ENCODE measurements at regions of chr1 and their contacts with region 1.

Region 1: GRCh38 chr1:209692745-209693504 is 11.7 kb upstream of the HSD11B1 start:
- DNase-seq: peak; percentile 86

Region 2: DNA sequence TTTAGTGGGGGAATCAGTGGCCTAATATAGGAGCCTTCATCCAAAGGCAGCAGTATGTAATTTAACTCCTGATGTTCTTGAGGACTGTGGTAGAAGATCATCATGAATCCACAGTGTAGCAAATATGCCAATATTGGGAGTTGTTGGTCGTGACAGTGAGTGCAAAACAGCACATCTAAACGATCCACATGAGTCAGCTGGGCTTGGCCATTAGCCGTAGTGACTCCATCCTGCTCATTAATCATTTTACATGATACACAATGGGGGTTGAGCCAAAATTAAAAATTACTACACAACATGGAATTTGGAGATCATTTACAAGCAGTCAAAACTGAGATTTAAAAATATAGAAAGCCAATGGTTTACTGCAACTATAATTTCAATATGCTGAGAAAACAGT is 763.4 kb before region 1 on chr1:
- intact Hi-C with region 1: no loop called
- DNase-seq: no peak

Region 3: GRCh38 chr1:209576798-209577197 is 116.1 kb before region 1 on chr1:
- intact Hi-C with region 1: loop called (anchors 5 kb)
- DNase-seq: peak; percentile 92

Region 4: GRCh38 chr1:209590405-209590804 is 102.5 kb before region 1 on chr1:
- intact Hi-C with region 1: loop called in 1 of 2 experiments (anchors 10 kb)
- DNase-seq: no peak

Region 5: DNA sequence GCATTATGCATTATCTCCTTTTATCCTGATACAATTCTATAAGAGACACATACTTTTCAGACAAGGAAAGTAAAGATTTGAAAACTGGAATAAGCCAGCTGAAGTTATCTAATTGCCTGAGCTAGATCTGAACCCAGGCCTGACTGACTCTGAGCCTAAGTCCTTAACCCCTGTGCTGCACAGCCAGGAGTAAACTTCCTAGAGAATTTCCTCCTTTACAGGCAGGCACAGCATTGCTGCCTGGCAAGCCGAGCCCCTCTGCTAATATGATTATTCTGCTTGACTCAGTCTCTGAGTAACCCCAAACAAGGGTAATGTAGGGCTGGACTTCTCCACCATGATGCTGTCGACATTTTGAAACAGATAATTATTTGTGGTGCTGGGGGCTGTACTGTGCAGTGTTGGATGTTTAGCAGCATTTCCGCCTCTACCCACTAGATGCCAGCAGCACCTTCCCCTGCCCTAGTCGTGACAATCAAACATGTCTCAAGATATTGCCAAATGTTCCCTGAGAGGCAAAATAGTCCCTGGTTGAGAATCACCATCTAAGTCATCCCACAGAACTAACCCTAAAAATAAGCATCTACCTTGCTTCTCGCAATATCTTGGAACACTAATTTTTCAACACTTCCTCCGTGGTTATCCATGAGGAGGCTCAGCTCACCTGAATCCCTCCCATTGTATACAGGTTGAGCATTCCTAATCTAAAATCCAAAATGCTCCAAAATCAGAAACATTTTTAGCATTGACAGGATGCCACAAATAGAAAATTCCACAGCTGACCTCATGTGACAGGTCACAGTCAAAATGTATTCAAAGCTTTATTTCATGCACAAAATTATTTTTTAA is 90.9 kb before region 1 on chr1:
- intact Hi-C with region 1: loop called (anchors 10 kb)
- DNase-seq: no peak

Region 6: DNA sequence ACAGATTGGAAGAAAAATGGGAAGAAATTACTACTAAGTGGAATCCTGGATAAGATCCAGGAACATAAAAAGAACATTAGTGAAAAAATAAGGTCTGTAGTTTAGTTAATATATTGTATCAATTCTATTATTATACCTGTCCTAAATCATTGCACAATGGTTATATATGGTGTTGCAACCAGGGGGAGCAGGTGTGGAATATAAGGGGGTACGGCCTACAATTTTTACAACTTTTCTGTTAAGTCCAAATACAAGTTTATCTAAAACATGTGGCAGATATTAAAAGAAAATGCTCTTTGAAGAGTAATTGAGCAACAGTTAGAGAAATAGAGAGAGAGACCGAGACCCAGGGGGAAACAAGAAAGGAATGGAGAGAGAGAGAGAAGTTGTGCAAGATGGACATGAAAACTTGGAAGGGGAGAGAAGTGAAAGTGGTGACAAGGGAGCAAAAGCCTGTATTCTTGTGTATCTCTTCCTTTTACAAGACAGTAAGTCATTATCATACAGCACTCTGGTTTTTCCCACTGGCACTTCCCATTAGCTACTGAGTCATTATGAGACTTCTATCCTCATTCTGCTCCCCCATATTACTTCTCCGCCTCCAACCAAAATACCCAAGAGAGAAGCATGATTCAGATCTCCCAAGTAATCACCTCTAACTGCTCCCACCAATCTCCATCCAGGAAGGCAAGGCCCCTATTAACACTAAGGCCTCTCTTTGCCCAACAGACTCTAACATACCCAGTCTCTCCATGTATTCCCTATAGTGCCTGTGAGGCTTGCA is 40.7 kb after region 1 on chr1:
- intact Hi-C with region 1: no loop called
- DNase-seq: no peak

Region 7: GRCh38 chr1:209755926-209756614 is 63.1 kb after region 1 on chr1 and contains the start of gene TRAF3IP3:
- intact Hi-C with region 1: no loop called
- DNase-seq: no peak
- total RNA-seq, gene TRAF3IP3: 2.8 to 3.1 TPM